ENCODE measurements at regions of chr1 and their contacts with region 1.

Region 1: DNA sequence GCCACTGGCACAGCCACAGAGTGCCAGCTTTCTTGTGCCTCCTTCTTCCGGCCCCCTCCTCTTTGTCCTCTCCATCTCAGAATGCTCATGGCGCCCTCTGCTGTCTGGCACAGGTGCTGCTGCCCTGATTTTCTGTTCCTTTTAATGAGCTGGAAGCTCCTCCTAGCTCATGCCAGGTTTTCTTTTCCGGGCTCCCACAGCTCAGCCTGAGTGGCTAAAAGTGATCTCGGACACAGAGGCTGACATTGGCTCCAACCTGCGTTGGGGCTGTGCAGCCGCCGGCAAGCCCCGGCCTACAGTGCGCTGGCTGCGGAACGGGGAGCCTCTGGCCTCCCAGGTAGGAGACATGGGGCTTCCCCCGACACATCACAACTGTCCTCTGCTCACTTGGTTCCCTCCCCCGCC is 18.7 kb downstream of the CNTN2 start:
- DNase-seq: peak; percentile 52 to 82
- ATAC-seq: peak; percentile 67 to 82 (median 81)
- H3K4me3 ChIP-seq: no peak overlapping the region
- H3K4me3 Mint-ChIP-seq: no peak overlapping the region
- H3K27ac ChIP-seq: no peak overlapping the region
- H3K27ac Mint-ChIP-seq: no peak overlapping the region
- H3K4me1 ChIP-seq: peaks cover 6% of the 10 kb centered on the region
- H3K4me1 Mint-ChIP-seq: no peaks in the 10 kb centered on the region
- H3K27me3 ChIP-seq: no peaks in the 10 kb centered on the region
- H3K27me3 Mint-ChIP-seq: peaks cover 0 to 4% of the 10 kb centered on the region in 2 donors
- CTCF ChIP-seq: peak; percentile 68

Region 2: DNA sequence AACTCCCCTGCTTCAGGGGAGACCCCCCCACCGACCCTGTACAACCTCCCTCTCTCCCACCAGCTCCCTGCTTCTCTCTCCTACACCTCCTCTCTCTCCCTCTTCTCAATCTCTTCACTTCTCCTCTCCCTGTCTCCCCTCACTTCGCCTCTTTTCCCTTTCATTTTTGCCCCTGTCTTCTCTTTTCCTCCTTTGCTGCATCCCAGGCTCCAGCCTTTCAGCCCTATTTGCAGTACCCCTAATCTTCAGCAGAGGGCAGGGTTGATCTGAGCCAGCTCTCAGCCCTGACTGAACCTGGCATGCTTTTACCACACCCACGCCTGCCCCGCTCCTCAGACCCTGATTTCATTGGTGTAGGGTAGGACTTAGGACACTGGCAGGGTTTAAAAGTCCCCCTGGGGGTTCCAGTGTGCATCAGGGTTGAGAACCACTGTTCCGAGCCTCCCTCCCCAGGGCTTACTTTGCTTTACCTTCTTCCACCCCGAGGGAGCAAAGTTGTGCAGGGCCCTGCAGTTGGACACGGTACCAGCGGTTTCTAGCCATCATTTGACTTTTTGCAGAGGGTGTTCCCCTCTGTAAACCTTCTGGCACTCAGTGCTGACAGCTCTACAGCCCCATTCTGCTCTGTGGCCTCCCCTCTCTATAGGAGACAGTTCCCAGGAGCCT is 86.0 kb before region 1 on chr1:
- intact Hi-C with region 1: loop called (anchors 10 kb)
- DNase-seq: peak in 1 of 2 donors; percentile 68
- ATAC-seq: peak; percentile 62 to 82 (median 69)
- H3K4me3 ChIP-seq: no peak overlapping the region
- H3K4me3 Mint-ChIP-seq: no peak overlapping the region
- H3K27ac ChIP-seq: no peak overlapping the region
- H3K27ac Mint-ChIP-seq: no peak overlapping the region
- H3K4me1 ChIP-seq: peaks cover 8% of the 10 kb centered on the region
- H3K4me1 Mint-ChIP-seq: no peaks in the 10 kb centered on the region
- H3K27me3 ChIP-seq: no peaks in the 10 kb centered on the region
- H3K27me3 Mint-ChIP-seq: peaks cover 6 to 34% of the 10 kb centered on the region in 2 donors
- CTCF ChIP-seq: peak; percentile 62

Region 3: DNA sequence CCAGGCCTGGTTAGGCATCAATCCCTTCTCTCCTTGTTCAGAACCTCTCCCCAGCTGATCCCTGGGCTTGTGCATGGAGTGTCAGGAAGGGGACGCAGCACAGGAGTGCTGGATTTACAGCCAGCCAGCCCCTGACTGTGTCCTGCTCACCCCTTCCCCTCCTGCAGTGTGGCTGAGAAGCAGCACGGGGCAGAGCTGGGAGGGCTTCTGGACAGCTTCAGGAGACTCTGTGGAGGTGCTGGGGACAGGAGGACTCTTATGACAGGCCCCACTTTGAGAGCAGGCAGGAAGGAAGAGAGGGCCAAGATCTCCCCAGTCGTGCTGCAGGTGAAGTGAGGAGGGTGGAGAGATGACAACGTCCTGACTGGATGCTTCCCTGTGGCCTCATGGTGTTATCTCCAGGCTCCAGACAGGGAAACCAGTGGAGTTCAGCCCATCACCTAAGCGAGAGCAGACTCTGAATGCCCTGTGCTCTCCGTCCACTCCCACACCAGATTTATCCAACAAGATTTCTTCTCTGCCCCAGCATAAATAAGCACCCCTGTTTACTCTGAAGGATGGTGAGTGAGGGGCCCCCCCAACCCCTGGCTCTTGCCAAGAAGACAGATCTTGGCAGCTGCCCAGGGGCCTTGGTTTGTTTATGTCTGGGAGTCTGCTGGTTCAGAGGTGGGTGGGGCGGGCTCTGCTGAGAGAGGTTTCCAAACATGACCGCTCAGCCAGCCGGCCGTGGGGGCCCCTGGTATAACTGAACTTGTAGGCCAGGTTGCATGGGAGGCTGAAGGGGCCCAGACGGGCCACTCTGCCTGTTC is 187.3 kb after region 1 on chr1:
- intact Hi-C with region 1: loop called (anchors 10 kb)
- DNase-seq: no peak
- ATAC-seq: no peak
- H3K4me3 ChIP-seq: no peak overlapping the region
- H3K4me3 Mint-ChIP-seq: no peak overlapping the region
- H3K27ac ChIP-seq: no peak overlapping the region
- H3K27ac Mint-ChIP-seq: no peak overlapping the region
- H3K4me1 ChIP-seq: no peaks in the 10 kb centered on the region
- H3K4me1 Mint-ChIP-seq: no peaks in the 10 kb centered on the region
- H3K27me3 ChIP-seq: no peaks in the 10 kb centered on the region
- H3K27me3 Mint-ChIP-seq: peaks cover 6 to 8% of the 10 kb centered on the region in 2 donors
- CTCF ChIP-seq: no peak